ENCODE measurements at regions of chr10 and their contacts with region 1.

Region 1: GRCh38 chr10:69639291-69640195 is 9.5 kb downstream of the FAM241B start:
- DNase-seq: peak; percentile 77
- H3K4me3 Mint-ChIP-seq: no peak overlapping the region
- H3K27ac Mint-ChIP-seq: no peak overlapping the region
- H3K4me1 Mint-ChIP-seq: peaks cover 23% of the 10 kb centered on the region
- H3K27me3 Mint-ChIP-seq: no peaks in the 10 kb centered on the region
- CTCF ChIP-seq: peak; percentile 84

Region 2: DNA sequence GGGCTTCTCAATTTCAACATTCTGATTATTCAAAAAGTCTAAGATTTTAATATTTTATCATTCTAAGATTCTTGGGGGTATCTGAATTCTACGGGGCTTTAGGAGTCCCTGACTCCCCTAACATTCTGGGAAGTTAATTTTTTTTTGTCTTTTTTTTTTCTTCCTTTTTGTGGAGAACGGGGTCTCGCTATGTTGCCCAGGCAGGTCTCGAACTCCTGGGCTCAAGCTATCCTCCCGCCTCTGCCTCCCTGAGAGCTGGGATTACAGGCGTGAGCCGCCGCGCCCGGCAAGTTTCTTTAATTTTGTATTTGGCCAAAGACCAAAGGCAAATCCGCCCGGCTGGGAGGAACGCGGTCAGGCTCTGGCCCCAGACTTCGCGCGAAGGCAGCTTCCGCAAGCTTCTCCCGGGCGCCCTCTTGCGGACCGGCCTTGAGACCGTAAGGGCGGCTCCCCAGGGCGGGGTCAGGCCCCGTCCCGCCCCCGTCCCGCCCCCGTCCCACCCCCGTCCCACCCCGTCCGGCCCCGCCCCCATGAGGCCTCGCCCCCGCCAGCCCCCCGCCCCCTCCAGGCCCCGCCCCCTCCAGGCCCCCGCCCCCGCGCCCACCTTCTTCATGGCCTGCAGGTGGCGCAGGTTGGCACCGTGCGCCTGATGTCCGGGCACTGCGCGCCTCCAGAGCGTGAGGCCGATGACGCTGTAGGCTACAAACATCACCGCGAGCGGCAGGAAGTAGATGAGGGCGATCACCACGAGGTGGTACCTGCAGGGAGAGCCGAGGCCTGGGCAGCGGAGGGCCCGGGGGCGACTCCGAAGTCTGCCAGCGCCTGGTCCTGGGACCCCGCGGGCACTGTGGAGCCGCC is 231.0 kb before region 1 on chr10:
- CTCF ChIA-PET with region 1: interaction called, 6 read pairs
- POLR2A ChIA-PET with region 1: no interaction called
- intact Hi-C with region 1: loop called (anchors 1 kb)
- DNase-seq: peak; percentile 93
- H3K4me3 Mint-ChIP-seq: peak overlapping the region; percentile 65
- H3K27ac Mint-ChIP-seq: peak overlapping the region; percentile 40
- H3K4me1 Mint-ChIP-seq: peaks cover 16% of the 10 kb centered on the region
- H3K27me3 Mint-ChIP-seq: no peaks in the 10 kb centered on the region
- CTCF ChIP-seq: peak; percentile 76

Region 3: DNA sequence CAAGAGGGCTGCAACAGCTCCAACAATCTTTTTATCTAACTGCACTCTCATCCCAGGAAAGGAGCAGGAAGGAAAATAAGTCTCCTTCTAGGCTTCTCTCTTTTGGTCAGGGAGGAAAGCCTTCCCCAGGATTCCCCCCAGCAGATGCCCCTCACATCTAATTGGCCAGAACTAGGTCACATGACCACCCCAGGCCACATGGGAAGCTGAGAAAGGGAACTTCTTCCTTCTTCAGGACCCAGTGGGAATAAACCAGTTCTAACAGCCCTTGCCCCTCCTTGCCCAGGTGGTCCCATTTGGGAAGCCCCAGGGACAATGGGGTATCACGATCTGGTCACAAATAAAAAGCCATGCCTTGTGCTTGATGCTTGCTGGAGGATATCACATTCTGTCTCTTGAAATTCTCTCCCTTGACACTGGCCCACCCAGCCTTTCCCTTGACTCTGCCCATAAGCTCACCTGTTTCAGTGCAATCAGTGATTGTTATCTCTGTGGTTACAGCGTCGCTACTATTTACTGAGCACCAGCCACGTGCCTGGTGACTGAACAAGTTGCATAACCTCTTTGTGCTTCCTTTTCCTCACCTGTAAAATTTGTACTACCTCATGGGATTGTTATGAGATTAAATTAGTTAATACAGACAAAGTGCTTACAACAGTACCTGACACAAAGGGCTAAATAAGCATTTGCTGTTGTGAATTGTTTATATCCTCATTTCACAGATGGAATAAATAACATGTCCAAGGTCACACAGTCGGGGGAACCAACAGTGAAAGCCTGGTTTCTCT is 213.8 kb before region 1 on chr10:
- CTCF ChIA-PET with region 1: interaction called, 7 read pairs
- POLR2A ChIA-PET with region 1: no interaction called
- intact Hi-C with region 1: loop called (anchors 5 kb)
- DNase-seq: no peak
- H3K4me3 Mint-ChIP-seq: no peak overlapping the region
- H3K27ac Mint-ChIP-seq: no peak overlapping the region
- H3K4me1 Mint-ChIP-seq: peaks cover 12% of the 10 kb centered on the region
- H3K27me3 Mint-ChIP-seq: no peaks in the 10 kb centered on the region
- CTCF ChIP-seq: no peak

Region 4: GRCh38 chr10:69506834-69507721 is 132.5 kb before region 1 on chr10:
- CTCF ChIA-PET with region 1: interaction called, 248 read pairs
- POLR2A ChIA-PET with region 1: interaction called, 4 read pairs
- intact Hi-C with region 1: no loop called
- DNase-seq: no peak
- H3K4me3 Mint-ChIP-seq: peak overlapping the region; percentile 64
- H3K27ac Mint-ChIP-seq: no peak overlapping the region
- H3K4me1 Mint-ChIP-seq: peaks cover 7% of the 10 kb centered on the region
- H3K27me3 Mint-ChIP-seq: peaks cover 19% of the 10 kb centered on the region
- CTCF ChIP-seq: no peak

Region 5: DNA sequence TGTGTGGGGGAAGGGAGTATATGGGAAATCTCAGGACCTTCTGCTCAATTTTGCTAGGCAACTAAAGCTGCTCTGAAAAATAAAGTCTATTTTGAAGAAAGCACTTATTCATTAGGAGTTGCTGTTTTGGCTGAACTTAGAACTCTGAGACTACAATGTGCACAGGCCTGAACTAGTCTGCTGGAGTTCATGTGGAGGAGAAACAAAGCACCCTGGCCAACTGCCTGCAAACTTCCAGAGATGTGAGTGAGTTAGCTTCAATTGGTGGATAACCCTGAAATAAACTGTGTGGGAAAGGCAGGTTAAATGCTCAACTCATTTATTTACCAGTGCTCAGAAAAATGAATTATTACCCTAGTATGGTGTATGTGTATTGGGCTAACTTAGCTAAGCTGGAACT is 26.8 kb before region 1 on chr10:
- CTCF ChIA-PET with region 1: interaction called, 20 read pairs
- POLR2A ChIA-PET with region 1: interaction called, 3 read pairs
- intact Hi-C with region 1: no loop called
- DNase-seq: no peak
- H3K4me3 Mint-ChIP-seq: no peak overlapping the region
- H3K27ac Mint-ChIP-seq: no peak overlapping the region
- H3K4me1 Mint-ChIP-seq: no peaks in the 10 kb centered on the region
- H3K27me3 Mint-ChIP-seq: peaks cover 33% of the 10 kb centered on the region
- CTCF ChIP-seq: no peak

Region 6: DNA sequence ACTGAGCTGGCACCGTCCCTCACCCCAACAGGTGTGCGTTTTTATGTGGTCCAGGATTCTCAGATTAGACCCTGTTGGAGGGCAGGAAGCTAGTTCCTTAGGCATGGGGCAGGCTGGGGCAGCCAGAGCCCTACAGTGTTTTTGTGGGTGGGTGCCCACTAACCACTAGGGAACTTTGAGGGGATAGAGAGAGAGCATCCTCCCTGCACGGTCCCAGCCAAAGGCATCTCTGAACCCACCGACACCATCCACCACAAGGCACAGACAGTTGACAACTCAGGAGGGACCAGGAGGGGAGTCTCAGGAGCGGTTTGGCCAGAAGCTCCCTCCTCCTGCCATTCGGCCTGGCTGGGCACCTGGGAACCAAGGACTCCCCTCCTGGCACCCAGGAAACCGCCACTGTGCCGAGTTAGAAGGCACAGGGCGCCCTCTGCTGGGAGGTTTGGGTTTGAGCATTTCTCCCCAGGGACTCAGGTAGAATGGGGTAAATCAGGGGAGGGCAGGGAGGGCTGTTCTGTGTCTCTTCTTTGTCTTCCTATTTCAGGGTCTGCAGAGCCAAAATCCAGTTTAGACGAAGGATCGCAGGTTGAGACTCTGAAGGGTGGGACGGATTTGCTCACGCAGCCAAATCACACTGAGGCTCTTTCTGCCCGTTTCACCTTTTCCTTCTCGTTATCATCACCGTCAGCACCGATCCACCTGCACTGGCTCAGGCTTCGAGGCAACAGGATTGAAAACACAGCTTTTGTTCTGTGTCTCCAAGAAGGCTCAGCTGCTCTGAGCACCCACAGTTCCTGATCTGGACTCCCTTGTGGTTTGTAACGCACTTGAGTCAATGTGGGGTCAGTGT is 77.4 kb after region 1 on chr10:
- CTCF ChIA-PET with region 1: interaction called, 104 read pairs
- POLR2A ChIA-PET with region 1: no interaction called
- intact Hi-C with region 1: loop called (anchors 1 kb)
- DNase-seq: peak; percentile 76
- H3K4me3 Mint-ChIP-seq: no peak overlapping the region
- H3K27ac Mint-ChIP-seq: no peak overlapping the region
- H3K4me1 Mint-ChIP-seq: peaks cover 17% of the 10 kb centered on the region
- H3K27me3 Mint-ChIP-seq: no peaks in the 10 kb centered on the region
- CTCF ChIP-seq: peak; percentile 88

Region 7: DNA sequence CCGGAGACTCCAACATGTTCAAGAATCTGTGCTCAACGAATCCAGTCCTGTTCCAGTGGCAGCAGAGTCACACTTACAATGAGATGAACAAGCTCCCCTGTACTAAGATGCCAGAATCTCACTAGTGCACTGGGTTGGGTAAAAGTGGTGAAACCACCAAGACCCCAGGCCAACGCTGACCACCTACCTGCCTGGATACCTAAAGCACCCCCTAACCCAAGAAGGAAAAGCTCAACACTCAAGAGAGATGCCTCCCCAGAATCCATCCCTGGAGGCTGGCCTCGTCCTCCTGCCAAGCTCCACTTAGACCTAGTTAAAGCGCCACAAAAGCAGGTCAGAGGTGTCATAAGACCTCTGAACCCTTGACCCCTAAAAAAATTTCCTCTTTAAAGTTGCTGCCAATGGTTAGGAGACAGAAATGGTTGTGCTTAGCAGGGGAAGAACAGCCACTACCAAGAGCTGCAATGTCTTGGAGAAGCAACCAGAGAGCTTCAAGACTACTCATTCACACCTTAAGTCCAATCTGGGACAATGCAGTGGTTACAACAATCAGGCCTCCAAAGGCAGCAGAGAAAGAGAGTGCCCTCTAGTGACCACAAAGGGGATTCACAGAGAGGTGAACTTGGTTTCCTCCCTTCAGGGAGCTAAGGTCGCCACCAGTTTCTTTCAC is 318.5 kb after region 1 on chr10:
- CTCF ChIA-PET with region 1: interaction called, 11 read pairs
- POLR2A ChIA-PET with region 1: no interaction called
- intact Hi-C with region 1: loop called (anchors 10 kb)
- DNase-seq: peak; percentile 71
- H3K4me3 Mint-ChIP-seq: no peak overlapping the region
- H3K27ac Mint-ChIP-seq: no peak overlapping the region
- H3K4me1 Mint-ChIP-seq: peaks cover 13% of the 10 kb centered on the region
- H3K27me3 Mint-ChIP-seq: peaks cover 1% of the 10 kb centered on the region
- CTCF ChIP-seq: peak; percentile 82

Measured in MCF 10A (cell line).